Heart right ventricle (tissue), 16 donors: ENCODE measurements at regions of chr4 and their contacts with region 1.

Region 1: GRCh38 chr4:70402762-70403161 is 5.0 kb downstream of the OPRPN start:
- DNase-seq: no peak
- ATAC-seq: no peak
- H3K4me3 ChIP-seq: no peak overlapping the region
- H3K27ac ChIP-seq: no peak overlapping the region
- H3K4me1 ChIP-seq: no peaks in the 10 kb centered on the region
- H3K27me3 ChIP-seq: no peaks in the 10 kb centered on the region
- CTCF ChIP-seq: no peak

Region 2: GRCh38 chr4:69038582-69038981 is 1364.2 kb before region 1 on chr4:
- intact Hi-C with region 1: loop called in 1 of 10 experiments (anchors 5 kb)
- DNase-seq: no peak
- ATAC-seq: no peak
- H3K4me3 ChIP-seq: no peak overlapping the region
- H3K27ac ChIP-seq: no peak overlapping the region
- H3K4me1 ChIP-seq: no peaks in the 10 kb centered on the region
- H3K27me3 ChIP-seq: no peaks in the 10 kb centered on the region
- CTCF ChIP-seq: no peak

Region 3: DNA sequence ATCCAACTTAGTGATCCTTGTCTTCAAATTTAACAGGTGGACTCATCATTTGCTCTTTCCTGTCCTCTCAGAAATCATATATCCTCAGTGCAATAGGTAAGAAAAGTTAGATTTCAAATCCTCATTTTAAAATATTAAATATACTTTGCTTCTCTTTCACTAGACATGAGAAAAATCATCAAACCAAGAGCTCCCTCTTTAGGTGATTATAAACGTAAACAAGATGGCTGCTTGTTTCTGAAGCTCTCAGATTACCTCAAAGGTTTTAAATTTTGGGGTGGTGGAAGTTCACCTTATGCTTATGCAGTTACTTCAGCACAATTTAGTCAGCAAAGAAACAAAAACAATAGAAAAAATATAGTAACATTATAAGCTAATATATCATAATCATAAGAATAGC is 133.1 kb before region 1 on chr4:
- intact Hi-C with region 1: no loop called
- DNase-seq: no peak
- ATAC-seq: no peak
- H3K4me3 ChIP-seq: no peak overlapping the region
- H3K27ac ChIP-seq: no peak overlapping the region
- H3K4me1 ChIP-seq: no peaks in the 10 kb centered on the region
- H3K27me3 ChIP-seq: no peaks in the 10 kb centered on the region
- CTCF ChIP-seq: no peak